ENCODE measurements at regions of chr18 and their contacts with region 1.

Region 1: GRCh38 chr18:22813648-22814328 is 119.3 kb upstream of the RBBP8 start:
- DNase-seq: no peak
- ATAC-seq: peak; percentile 78
- H3K4me3 ChIP-seq: no peak overlapping the region
- H3K27ac ChIP-seq: no peak overlapping the region
- H3K4me1 ChIP-seq: no peaks in the 10 kb centered on the region
- H3K27me3 ChIP-seq: no peaks in the 10 kb centered on the region
- CTCF ChIP-seq: peak; percentile 48 to 79 (median 65); a peak in 5 of 6 replicates
- EP300 ChIP-seq: no peak
- POLR2A ChIP-seq: no peak
- RAD21 ChIP-seq: peak; percentile 98

Region 2: GRCh38 chr18:21714474-21714873 is 1099.3 kb before region 1 on chr18:
- CTCF ChIA-PET with region 1: no interaction called
- POLR2A ChIA-PET with region 1: no interaction called
- RAD21 ChIA-PET with region 1: no interaction called
- SMC1A ChIA-PET with region 1: no interaction called
- in situ Hi-C with region 1: no loop called
- intact Hi-C with region 1: no loop called
- DNase-seq: no peak
- ATAC-seq: no peak
- H3K4me3 ChIP-seq: no peak overlapping the region
- H3K27ac ChIP-seq: no peak overlapping the region
- H3K4me1 ChIP-seq: no peaks in the 10 kb centered on the region; the same call in 1 of the 2 replicates
- H3K27me3 ChIP-seq: no peaks in the 10 kb centered on the region
- CTCF ChIP-seq: no peak
- EP300 ChIP-seq: no peak
- POLR2A ChIP-seq: no peak
- RAD21 ChIP-seq: no peak

Region 3: DNA sequence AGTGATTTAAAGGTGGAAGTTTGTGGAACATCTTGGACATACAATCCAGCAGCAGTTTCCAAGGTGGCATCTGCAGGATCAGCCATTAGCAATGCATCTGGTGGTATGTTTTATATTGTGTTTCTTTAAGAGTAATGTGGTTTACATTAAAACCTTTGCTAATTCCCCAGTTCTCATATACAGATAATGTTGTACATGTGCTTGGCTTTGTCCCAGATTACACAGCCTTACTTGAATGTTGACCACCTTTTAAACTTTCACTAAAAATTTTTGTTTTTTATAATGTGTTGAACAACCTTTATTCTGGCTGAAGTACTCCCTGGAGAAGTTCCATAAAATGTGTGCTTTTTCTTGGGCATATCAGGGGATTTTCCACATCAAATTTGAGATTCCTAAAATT is 1015.7 kb before region 1 on chr18:
- CTCF ChIA-PET with region 1: no interaction called
- POLR2A ChIA-PET with region 1: no interaction called
- RAD21 ChIA-PET with region 1: no interaction called
- SMC1A ChIA-PET with region 1: no interaction called
- in situ Hi-C with region 1: no loop called
- intact Hi-C with region 1: no loop called
- DNase-seq: no peak
- ATAC-seq: no peak
- H3K4me3 ChIP-seq: no peak overlapping the region
- H3K27ac ChIP-seq: no peak overlapping the region
- H3K4me1 ChIP-seq: no peaks in the 10 kb centered on the region
- H3K27me3 ChIP-seq: no peaks in the 10 kb centered on the region
- CTCF ChIP-seq: no peak
- EP300 ChIP-seq: no peak
- POLR2A ChIP-seq: no peak
- RAD21 ChIP-seq: no peak

Region 4: DNA sequence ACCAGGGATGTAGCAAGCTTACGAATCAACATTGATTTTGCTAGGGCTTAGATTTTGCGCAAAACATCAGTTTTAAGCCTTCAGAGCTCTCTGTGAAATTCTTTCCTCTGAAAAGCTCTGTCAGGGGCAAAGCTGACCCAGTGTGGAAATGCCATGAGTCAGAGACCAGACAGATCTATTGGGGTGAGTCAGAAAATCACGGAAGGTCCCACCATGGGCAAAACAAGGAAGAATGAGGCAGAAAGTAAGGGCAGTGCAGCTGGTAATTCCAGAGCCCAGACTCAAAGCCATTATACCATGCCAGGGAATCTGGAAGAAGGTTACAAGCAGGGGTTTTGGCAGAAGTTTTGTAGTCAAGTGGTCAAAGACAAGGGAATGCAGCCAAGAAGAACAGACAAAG is 139.5 kb before region 1 on chr18:
- CTCF ChIA-PET with region 1: no interaction called
- POLR2A ChIA-PET with region 1: no interaction called
- RAD21 ChIA-PET with region 1: no interaction called
- SMC1A ChIA-PET with region 1: no interaction called
- in situ Hi-C with region 1: no loop called
- intact Hi-C with region 1: no loop called
- DNase-seq: no peak
- ATAC-seq: no peak
- H3K4me3 ChIP-seq: no peak overlapping the region
- H3K27ac ChIP-seq: no peak overlapping the region
- H3K4me1 ChIP-seq: no peaks in the 10 kb centered on the region; the same call in 1 of the 2 replicates
- H3K27me3 ChIP-seq: no peaks in the 10 kb centered on the region; a peak in 1 of 4 replicates
- CTCF ChIP-seq: no peak
- EP300 ChIP-seq: no peak
- POLR2A ChIP-seq: no peak
- RAD21 ChIP-seq: no peak

Region 5: GRCh38 chr18:22831441-22831904 is 17.7 kb after region 1 on chr18:
- CTCF ChIA-PET with region 1: interaction called, 3 read pairs
- POLR2A ChIA-PET with region 1: no interaction called
- RAD21 ChIA-PET with region 1: interaction called, 4 read pairs
- SMC1A ChIA-PET with region 1: interaction called, 10 read pairs
- in situ Hi-C with region 1: no loop called
- intact Hi-C with region 1: no loop called
- DNase-seq: no peak
- ATAC-seq: peak; percentile 87
- H3K4me3 ChIP-seq: no peak overlapping the region
- H3K27ac ChIP-seq: no peak overlapping the region
- H3K4me1 ChIP-seq: no peaks in the 10 kb centered on the region
- H3K27me3 ChIP-seq: no peaks in the 10 kb centered on the region
- CTCF ChIP-seq: no peak
- EP300 ChIP-seq: no peak
- POLR2A ChIP-seq: no peak
- RAD21 ChIP-seq: no peak

Region 6: GRCh38 chr18:22838639-22839277 is 25.0 kb after region 1 on chr18:
- CTCF ChIA-PET with region 1: interaction called, 12 read pairs
- POLR2A ChIA-PET with region 1: no interaction called
- RAD21 ChIA-PET with region 1: interaction called, 11 read pairs
- SMC1A ChIA-PET with region 1: interaction called, 6 read pairs
- in situ Hi-C with region 1: no loop called
- intact Hi-C with region 1: no loop called
- DNase-seq: peak; percentile 8
- ATAC-seq: peak; percentile 89
- H3K4me3 ChIP-seq: peak overlapping the region; percentile 30; the same call in 1 of the 2 replicates
- H3K27ac ChIP-seq: no peak overlapping the region
- H3K4me1 ChIP-seq: peaks cover 9% of the 10 kb centered on the region
- H3K27me3 ChIP-seq: no peaks in the 10 kb centered on the region
- CTCF ChIP-seq: no peak
- EP300 ChIP-seq: no peak
- POLR2A ChIP-seq: no peak
- RAD21 ChIP-seq: no peak

Region 7: GRCh38 chr18:22865354-22866116 is 51.7 kb after region 1 on chr18:
- CTCF ChIA-PET with region 1: no interaction called
- POLR2A ChIA-PET with region 1: no interaction called
- RAD21 ChIA-PET with region 1: no interaction called
- SMC1A ChIA-PET with region 1: no interaction called
- in situ Hi-C with region 1: no loop called
- intact Hi-C with region 1: no loop called
- DNase-seq: no peak
- ATAC-seq: no peak
- H3K4me3 ChIP-seq: no peak overlapping the region
- H3K27ac ChIP-seq: no peak overlapping the region
- H3K4me1 ChIP-seq: no peaks in the 10 kb centered on the region
- H3K27me3 ChIP-seq: no peaks in the 10 kb centered on the region; a peak in 1 of 4 replicates
- CTCF ChIP-seq: no peak
- EP300 ChIP-seq: no peak
- POLR2A ChIP-seq: no peak
- RAD21 ChIP-seq: no peak

Region 8: DNA sequence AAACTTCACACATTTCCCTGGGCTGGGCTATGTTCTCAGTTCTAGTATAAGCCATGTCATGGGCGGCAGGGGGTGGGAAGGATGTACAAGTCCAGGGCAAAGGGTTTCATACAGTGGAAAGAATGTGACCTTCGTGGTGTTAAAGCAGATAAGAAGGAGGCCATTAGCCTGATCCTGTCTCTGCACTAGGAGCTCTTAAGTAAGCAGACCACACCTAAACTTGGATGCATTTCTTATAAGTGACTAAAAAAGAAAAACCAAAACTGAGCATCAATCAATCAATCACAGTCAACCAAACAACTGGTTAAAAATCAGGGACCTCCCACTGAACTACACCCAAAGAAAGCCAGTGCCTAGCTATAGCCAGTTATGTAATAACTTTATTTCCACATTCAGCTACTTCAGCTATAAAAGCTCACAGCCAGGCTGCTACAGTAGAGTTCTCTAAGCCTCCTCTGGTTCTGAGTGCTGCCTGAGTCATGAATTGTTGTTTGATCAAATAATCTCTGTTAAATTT is 592.5 kb after region 1 on chr18:
- CTCF ChIA-PET with region 1: interaction called, 17 read pairs
- POLR2A ChIA-PET with region 1: no interaction called
- RAD21 ChIA-PET with region 1: interaction called, 5 read pairs
- SMC1A ChIA-PET with region 1: interaction called, 14 read pairs
- in situ Hi-C with region 1: loop called (anchors 10 kb)
- intact Hi-C with region 1: loop called (anchors 5 kb)
- DNase-seq: no peak
- ATAC-seq: no peak
- H3K4me3 ChIP-seq: no peak overlapping the region
- H3K27ac ChIP-seq: no peak overlapping the region
- H3K4me1 ChIP-seq: no peaks in the 10 kb centered on the region
- H3K27me3 ChIP-seq: no peaks in the 10 kb centered on the region
- CTCF ChIP-seq: no peak
- EP300 ChIP-seq: no peak
- POLR2A ChIP-seq: no peak
- RAD21 ChIP-seq: no peak

Measured in GM12878 (cell line).